GM12878 (cell line): ENCODE measurements at regions of chr12 and their contacts with region 1.

Region 1: GRCh38 chr12:110661337-110661972 is 27.5 kb downstream of the HVCN1 start:
- DNase-seq: peak; percentile 92
- ATAC-seq: peak; percentile 95
- H3K4me3 ChIP-seq: peak overlapping the region; percentile 65
- H3K27ac ChIP-seq: peak overlapping the region; percentile 88
- H3K4me1 ChIP-seq: peaks cover 44% of the 10 kb centered on the region
- H3K27me3 ChIP-seq: no peaks in the 10 kb centered on the region
- CTCF ChIP-seq: no peak
- EP300 ChIP-seq: peak; percentile 90 to 97
- POLR2A ChIP-seq: peak; percentile 82
- RAD21 ChIP-seq: peak; percentile 18; the same call in 1 of the 2 replicates

Region 2: GRCh38 chr12:110689281-110690126 is 28.0 kb after region 1 on chr12:
- CTCF ChIA-PET with region 1: interaction called, 10 read pairs
- POLR2A ChIA-PET with region 1: interaction called, 80 read pairs
- RAD21 ChIA-PET with region 1: interaction called, 43 read pairs
- SMC1A ChIA-PET with region 1: interaction called, 80 read pairs
- in situ Hi-C with region 1: no loop called
- intact Hi-C with region 1: no loop called
- DNase-seq: peak; percentile 57
- ATAC-seq: peak; percentile 75
- H3K4me3 ChIP-seq: peak overlapping the region; percentile 66
- H3K27ac ChIP-seq: peak overlapping the region; percentile 85
- H3K4me1 ChIP-seq: peaks cover 38% of the 10 kb centered on the region
- H3K27me3 ChIP-seq: no peaks in the 10 kb centered on the region
- CTCF ChIP-seq: no peak
- EP300 ChIP-seq: no peak
- POLR2A ChIP-seq: peak; percentile 89
- RAD21 ChIP-seq: no peak

Region 3: GRCh38 chr12:110698171-110698902 is 36.9 kb after region 1 on chr12:
- CTCF ChIA-PET with region 1: interaction called, 5 read pairs
- POLR2A ChIA-PET with region 1: interaction called, 3 read pairs
- RAD21 ChIA-PET with region 1: interaction called, 4 read pairs
- SMC1A ChIA-PET with region 1: interaction called, 24 read pairs
- in situ Hi-C with region 1: no loop called
- intact Hi-C with region 1: loop called (anchors 2 kb)
- DNase-seq: peak; percentile 90
- ATAC-seq: peak; percentile 99
- H3K4me3 ChIP-seq: no peak overlapping the region
- H3K27ac ChIP-seq: peak overlapping the region; percentile 64
- H3K4me1 ChIP-seq: peaks cover 29% of the 10 kb centered on the region
- H3K27me3 ChIP-seq: no peaks in the 10 kb centered on the region
- CTCF ChIP-seq: peak; percentile 88 to 90 (median 89)
- EP300 ChIP-seq: no peak
- POLR2A ChIP-seq: no peak
- RAD21 ChIP-seq: peak; percentile 92

Region 4: DNA sequence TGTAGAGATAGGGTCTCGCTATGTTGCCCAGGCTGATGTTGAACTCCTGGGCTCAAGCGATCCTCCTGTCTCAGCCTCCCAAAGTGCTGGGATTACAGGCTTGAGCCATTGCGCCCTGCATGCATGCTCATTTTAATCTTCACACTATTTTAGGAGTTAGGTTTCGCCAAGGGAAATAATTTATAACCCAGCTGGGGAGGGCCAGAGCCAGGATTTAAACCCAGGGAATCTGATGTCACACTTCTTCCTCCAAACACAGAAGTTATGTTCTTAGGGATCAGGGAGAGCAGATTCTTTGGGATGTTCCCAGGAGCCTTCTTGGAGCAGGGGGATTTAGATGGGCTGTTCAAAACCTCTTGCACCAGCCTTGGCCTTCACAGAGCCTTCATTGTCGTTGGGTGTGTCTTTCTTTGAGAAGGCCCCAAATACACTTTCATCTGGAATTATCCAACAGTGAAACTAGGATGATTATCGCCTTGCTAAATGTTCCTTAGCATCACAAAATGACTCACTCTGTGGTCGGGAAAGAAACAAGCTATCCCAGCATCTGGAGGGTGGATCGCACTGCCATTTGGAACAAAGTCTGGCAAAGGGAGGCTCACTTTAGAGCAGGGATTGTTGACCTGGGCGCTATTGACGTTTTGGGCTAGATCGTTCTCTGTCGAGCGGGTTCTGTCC is 89.5 kb after region 1 on chr12:
- CTCF ChIA-PET with region 1: no interaction called
- POLR2A ChIA-PET with region 1: no interaction called
- RAD21 ChIA-PET with region 1: no interaction called
- SMC1A ChIA-PET with region 1: no interaction called
- in situ Hi-C with region 1: no loop called
- intact Hi-C with region 1: no loop called
- DNase-seq: no peak
- ATAC-seq: no peak
- H3K4me3 ChIP-seq: no peak overlapping the region
- H3K27ac ChIP-seq: no peak overlapping the region
- H3K4me1 ChIP-seq: no peaks in the 10 kb centered on the region
- H3K27me3 ChIP-seq: no peaks in the 10 kb centered on the region; a peak in 1 of 4 replicates
- CTCF ChIP-seq: no peak
- EP300 ChIP-seq: no peak
- POLR2A ChIP-seq: no peak
- RAD21 ChIP-seq: no peak

Region 5: DNA sequence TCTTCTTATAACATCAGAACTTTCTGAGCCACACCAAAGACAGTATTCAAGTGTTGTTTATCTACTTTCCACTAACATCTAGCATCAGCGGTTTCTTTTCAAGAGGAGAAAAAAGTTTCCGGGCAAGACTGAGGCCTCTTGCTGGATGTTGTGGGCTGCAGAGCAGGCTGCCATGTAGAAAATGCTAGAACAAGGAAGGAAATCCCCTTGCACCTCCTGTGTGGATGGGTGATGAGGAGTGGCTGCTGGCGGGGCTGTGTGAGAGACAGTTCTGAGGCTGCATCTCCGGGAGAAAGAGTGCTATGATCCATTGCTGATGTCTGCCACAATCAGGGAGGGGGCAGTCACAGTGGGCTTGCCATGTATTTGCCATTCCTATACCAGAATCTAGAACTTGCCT is 119.0 kb after region 1 on chr12:
- CTCF ChIA-PET with region 1: no interaction called
- POLR2A ChIA-PET with region 1: no interaction called
- RAD21 ChIA-PET with region 1: no interaction called
- SMC1A ChIA-PET with region 1: no interaction called
- in situ Hi-C with region 1: no loop called
- intact Hi-C with region 1: no loop called
- DNase-seq: no peak
- ATAC-seq: no peak
- H3K4me3 ChIP-seq: no peak overlapping the region
- H3K27ac ChIP-seq: no peak overlapping the region
- H3K4me1 ChIP-seq: peaks cover 54% of the 10 kb centered on the region
- H3K27me3 ChIP-seq: no peaks in the 10 kb centered on the region
- CTCF ChIP-seq: no peak
- EP300 ChIP-seq: no peak
- POLR2A ChIP-seq: no peak
- RAD21 ChIP-seq: no peak